ENCODE measurements at regions of chr11 and their contacts with region 1.

Region 1: DNA sequence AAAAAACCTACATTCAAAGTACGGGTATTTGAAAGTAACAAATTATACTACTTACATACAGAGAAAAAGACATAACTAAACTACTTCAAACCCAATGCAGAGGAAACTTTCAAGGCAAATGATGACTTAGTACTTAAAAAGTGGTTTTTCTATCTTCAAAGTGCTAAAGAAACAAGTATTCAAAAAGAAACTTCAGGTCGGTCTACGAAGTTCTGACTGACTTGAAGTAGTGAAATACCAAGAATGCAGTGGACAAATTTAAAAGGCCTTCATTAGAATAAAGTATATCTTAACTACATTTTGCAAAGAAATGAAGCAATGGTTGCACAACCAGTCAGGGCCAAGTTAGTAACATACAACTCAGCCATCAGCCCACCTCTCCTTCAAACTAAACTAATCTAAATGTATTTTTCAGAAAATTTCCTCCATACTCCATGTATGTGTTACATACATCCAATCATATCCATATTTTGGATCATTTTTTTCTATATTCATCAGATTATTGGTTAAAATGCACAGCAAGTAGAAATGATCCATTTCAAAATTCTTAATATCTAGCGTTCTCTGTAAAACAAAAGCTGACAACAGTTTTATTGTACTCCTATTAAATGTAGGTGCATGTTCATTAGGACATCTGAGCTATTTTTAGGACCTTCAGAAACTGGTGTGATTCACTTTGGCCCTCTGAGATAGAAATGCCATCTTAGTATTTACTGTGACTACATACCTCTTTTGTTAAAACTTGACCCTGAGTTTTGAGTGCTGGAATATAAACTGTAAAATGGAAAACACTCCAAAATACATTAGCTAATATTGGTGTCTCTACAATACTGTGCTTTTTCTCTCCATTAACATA is 49.9 kb downstream of the BIRC2 start:
- DNase-seq: no peak
- ATAC-seq: peak; percentile 82
- H3K4me3 Mint-ChIP-seq: no peak overlapping the region
- H3K27ac Mint-ChIP-seq: peak overlapping the region; percentile 58
- H3K4me1 Mint-ChIP-seq: peaks cover 44% of the 10 kb centered on the region
- H3K27me3 Mint-ChIP-seq: no peaks in the 10 kb centered on the region

Region 2: DNA sequence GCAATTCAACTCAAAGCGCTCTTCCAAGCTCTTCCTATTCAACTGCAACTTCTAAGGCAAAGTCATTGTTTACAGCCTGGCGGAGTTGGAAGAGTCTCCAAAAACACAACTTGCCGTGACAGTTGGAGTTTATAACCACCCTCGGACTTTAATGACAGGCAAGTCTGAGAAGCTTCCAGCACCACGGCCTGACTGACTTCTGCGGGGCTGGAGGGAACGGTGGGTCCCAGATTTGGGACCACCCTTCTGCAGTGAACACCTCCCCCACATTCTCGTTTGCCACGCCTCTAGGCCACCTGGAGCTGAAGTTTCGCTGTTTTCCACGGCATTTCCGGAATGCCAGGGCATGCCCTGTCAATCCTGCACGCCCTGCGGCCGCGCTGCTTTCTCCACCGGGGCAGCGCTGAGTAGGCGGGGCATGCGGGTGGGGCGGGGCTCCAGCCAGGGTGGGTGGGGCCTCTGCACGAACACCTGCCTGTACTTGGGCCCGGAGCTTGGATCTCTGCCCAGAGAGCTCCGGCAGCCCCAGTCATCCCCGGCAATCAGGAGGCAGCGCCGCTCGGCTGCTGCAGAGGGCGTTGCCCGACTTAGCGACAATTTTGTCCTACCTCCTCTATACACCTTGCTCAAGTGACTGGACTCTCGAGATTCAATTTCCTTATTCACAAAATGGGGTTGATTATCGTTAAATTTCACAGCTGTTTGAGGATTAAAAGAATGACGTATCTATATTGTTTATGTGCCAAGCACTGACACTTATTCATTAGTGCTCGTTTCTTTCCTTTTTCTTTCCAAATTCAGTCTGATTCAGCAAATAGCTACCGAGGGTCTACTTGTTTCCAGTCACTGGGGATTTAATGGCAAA is 128.4 kb before region 1 on chr11:
- CTCF ChIA-PET with region 1: no interaction called
- POLR2A ChIA-PET with region 1: no interaction called
- intact Hi-C with region 1: no loop called
- DNase-seq: peak; percentile 93
- ATAC-seq: peak; percentile 98
- H3K4me3 Mint-ChIP-seq: peak overlapping the region; percentile 66
- H3K27ac Mint-ChIP-seq: peak overlapping the region; percentile 5
- H3K4me1 Mint-ChIP-seq: peaks cover 37% of the 10 kb centered on the region
- H3K27me3 Mint-ChIP-seq: peaks cover 5% of the 10 kb centered on the region

Region 3: GRCh38 chr11:102410382-102410784 is 13.4 kb after region 1 on chr11:
- CTCF ChIA-PET with region 1: interaction called, 12 read pairs
- POLR2A ChIA-PET with region 1: interaction called, 3 read pairs
- intact Hi-C with region 1: no loop called
- DNase-seq: no peak
- ATAC-seq: no peak
- H3K4me3 Mint-ChIP-seq: no peak overlapping the region
- H3K27ac Mint-ChIP-seq: no peak overlapping the region
- H3K4me1 Mint-ChIP-seq: peaks cover 88% of the 10 kb centered on the region
- H3K27me3 Mint-ChIP-seq: no peaks in the 10 kb centered on the region

Region 4: DNA sequence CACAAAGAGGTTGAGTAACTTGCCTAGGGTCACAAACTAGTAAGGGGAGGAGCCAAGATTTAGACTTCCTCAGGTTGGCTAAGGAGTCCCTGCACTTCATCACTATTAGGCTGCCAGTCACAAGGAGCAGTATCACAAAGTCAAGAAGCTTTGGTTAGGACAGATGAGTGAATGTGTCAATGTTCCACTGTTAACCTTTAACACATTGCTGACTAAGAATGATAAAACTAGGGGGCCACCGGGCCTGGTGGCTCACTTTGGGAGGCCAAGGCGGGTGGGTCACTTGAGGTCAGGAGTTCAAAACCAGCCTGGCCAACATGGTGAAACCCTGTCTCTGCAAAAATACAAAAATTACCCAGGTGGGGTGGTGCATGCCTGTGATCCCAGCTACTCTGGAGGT is 23.6 kb after region 1 on chr11:
- CTCF ChIA-PET with region 1: interaction called, 30 read pairs
- POLR2A ChIA-PET with region 1: no interaction called
- intact Hi-C with region 1: loop called (anchors 2 kb)
- DNase-seq: peak; percentile 59
- ATAC-seq: peak; percentile 73
- H3K4me3 Mint-ChIP-seq: no peak overlapping the region
- H3K27ac Mint-ChIP-seq: peak overlapping the region; percentile 53
- H3K4me1 Mint-ChIP-seq: peaks cover 95% of the 10 kb centered on the region
- H3K27me3 Mint-ChIP-seq: no peaks in the 10 kb centered on the region

Region 5: DNA sequence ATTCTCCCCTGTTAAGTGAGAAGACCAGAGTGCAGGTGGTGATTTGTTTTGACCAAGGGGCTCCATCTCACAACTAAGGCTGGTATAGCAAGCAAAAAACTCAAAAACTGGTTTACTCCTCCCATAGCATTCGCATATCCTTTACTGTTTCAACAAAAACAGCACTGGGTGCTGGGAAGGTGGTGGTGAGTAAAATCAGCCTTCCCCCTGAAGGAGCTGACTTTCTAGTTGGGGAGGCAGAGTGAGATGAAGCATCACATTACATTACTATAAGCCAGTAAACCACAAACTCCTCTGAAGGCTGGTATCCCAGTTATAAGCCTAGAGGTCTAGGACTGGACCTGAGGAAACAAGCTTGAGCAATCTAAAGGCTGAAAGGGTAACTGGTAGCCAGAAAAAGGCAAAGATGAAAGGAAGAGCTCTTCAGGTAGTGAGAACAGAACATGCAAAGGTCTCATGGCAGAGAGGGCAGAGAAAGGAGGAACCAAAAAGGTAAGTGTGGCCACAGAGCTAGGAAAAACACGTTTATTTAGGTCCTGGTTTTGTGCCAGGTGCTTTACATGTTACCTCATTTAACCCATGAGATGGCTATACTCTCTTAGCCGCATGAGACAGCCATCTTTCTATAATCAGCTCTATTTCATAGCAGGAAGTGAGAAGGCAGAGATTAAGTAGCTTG is 33.4 kb after region 1 on chr11:
- CTCF ChIA-PET with region 1: interaction called, 14 read pairs
- POLR2A ChIA-PET with region 1: no interaction called
- intact Hi-C with region 1: loop called in 1 of 2 experiments (anchors 5 kb)
- DNase-seq: peak; percentile 71
- ATAC-seq: peak; percentile 89
- H3K4me3 Mint-ChIP-seq: peak overlapping the region; percentile 23
- H3K27ac Mint-ChIP-seq: peak overlapping the region; percentile 96
- H3K4me1 Mint-ChIP-seq: peaks cover 79% of the 10 kb centered on the region
- H3K27me3 Mint-ChIP-seq: no peaks in the 10 kb centered on the region

Region 6: DNA sequence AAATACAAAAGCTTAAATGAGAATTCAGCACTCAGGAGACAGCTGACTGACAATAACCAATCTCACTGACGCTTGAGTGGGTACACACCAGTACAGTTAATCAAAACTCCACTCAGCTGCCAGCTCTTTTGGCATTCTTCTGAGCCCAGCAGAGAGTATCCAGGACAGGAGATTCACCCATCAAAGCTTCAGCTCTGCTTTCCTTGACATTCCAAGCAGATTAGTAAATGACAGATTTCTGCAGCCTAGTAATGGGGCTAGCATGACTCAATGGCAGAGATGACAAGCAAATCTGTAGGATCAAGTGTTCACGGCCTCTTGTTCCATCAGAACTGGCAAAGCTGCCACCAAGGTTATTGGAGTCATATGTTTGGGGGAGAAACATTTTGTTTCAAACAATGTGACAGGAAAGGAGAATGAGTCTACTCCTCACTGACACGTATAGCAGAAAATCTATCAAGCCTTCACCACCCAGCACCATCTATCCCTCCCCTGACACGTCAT is 1132.3 kb after region 1 on chr11:
- CTCF ChIA-PET with region 1: no interaction called
- POLR2A ChIA-PET with region 1: no interaction called
- intact Hi-C with region 1: no loop called
- DNase-seq: no peak
- ATAC-seq: no peak
- H3K4me3 Mint-ChIP-seq: no peak overlapping the region
- H3K27ac Mint-ChIP-seq: no peak overlapping the region
- H3K4me1 Mint-ChIP-seq: no peaks in the 10 kb centered on the region
- H3K27me3 Mint-ChIP-seq: peaks cover 8% of the 10 kb centered on the region